HepG2 (cell line): ENCODE measurements at regions of chrX and their contacts with region 1.

Region 1: DNA sequence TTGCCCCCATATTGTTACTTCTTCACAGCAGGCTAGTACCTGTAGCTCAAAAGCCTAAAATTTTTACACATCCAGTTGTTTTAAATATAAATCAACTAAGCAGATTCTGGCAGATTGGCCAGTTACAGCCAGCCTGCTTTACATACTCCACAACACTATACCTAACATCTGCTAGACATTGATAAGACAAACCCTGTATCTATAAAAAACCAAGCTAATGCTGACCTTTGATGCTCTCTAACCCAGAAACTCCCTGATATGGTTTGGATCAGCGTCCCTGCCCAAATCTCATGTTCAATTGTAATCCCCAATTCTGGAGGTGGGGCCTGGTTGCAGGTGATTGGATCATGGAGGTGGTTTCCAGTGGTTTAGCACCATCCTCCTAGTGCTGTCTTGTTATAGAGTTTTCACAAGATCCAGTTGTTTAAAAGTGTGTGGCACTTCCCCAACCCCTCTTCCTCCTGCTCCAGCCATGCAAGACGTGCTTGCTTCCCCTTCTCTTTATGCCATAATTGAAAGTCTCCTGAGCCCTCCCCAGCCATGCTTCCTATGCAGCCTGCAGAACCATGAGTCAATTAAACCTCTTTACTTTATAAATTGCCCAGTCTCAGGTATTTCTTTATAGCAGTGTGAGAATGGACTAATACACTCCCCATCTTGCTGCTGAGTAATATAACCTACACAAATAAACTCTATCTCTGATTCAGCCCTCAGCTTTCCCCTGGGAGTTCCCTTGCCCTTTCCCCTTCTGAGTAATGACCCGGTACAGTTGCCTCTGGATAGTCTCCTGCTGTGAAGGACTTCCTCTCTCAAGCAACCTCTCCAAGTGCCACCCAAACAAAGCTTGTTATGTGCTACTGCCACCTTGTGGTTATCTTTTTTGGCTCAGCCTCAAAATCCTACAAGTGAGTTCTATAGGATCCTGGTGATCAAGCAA is 39.6 kb downstream of the ZCCHC13 start:
- DNase-seq: peak; percentile 60
- ATAC-seq: peak; percentile 82
- H3K4me3 ChIP-seq: no peak overlapping the region
- H3K27ac ChIP-seq: no peak overlapping the region
- H3K4me1 ChIP-seq: no peaks in the 10 kb centered on the region
- H3K27me3 ChIP-seq: no peaks in the 10 kb centered on the region
- CTCF ChIP-seq: peak; percentile 75
- EP300 ChIP-seq: no peak
- POLR2A ChIP-seq: no peak
- RAD21 ChIP-seq: 0 out of 2 replicates have a peak, but pooled peaks have one; percentile 20

Region 2: DNA sequence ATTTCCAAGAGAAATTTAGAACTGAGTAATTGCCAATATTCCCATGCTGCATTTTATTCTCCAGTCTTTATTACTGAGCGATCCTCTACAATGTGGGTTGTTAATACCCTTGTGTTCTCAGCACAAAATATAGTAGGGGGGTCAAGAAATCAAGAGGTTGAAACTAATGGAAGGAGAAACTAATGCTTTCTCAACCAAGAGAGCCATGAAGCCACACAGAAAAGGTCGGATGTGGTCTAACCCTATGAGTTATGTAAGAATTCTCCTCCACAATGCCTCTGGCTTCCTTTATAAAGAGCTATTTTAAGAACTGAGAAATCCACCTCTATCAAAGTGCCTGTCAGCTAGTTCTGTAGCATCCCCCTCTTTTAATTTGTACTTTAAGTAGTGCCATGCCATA is 512.1 kb before region 1 on chrX:
- CTCF ChIA-PET with region 1: no interaction called
- POLR2A ChIA-PET with region 1: no interaction called
- in situ Hi-C with region 1: no loop called
- intact Hi-C with region 1: no loop called
- DNase-seq: no peak
- ATAC-seq: no peak
- H3K4me3 ChIP-seq: no peak overlapping the region
- H3K27ac ChIP-seq: no peak overlapping the region
- H3K4me1 ChIP-seq: no peaks in the 10 kb centered on the region
- H3K27me3 ChIP-seq: no peaks in the 10 kb centered on the region
- CTCF ChIP-seq: no peak
- EP300 ChIP-seq: no peak
- POLR2A ChIP-seq: no peak
- RAD21 ChIP-seq: no peak

Region 3: GRCh38 chrX:73855546-73855945 is 488.1 kb before region 1 on chrX:
- CTCF ChIA-PET with region 1: interaction called, 5 read pairs
- POLR2A ChIA-PET with region 1: no interaction called
- in situ Hi-C with region 1: loop called (anchors 10 kb)
- intact Hi-C with region 1: loop called (anchors 1 kb)
- DNase-seq: peak; percentile 22
- ATAC-seq: peak; percentile 79
- H3K4me3 ChIP-seq: no peak overlapping the region
- H3K27ac ChIP-seq: no peak overlapping the region
- H3K4me1 ChIP-seq: no peaks in the 10 kb centered on the region
- H3K27me3 ChIP-seq: no peaks in the 10 kb centered on the region
- CTCF ChIP-seq: peak; percentile 78
- EP300 ChIP-seq: no peak
- POLR2A ChIP-seq: no peak
- RAD21 ChIP-seq: peak; percentile 57

Region 4: DNA sequence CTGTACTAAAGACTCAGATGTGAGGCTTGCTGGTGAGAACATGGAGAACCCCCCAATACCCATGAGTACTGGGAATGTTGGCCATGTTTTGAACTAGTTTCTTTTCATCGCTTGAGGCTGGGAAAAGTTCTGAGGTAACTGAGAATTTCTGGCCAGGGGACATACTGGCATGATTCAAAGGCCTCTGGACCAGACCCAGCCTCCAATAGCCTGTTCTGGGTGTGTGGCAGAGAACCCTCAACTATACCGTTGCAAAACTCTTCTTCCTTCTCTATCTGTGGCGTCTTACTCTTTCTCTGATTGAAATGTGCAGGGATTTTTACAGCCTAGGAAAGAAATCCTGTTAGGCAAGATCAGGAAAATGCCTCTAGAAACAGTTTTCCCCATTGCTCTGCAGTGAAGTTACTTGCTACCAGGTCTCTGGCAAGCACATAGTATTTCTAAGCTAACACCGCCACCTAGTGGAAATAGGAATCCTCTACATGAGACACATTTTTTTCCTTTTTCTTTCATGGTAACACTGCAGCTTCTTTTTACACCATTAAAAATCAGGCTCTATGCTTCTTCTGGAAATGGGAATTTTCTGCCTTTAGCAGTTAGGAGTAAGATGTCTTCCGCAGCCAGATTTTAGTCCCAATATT is 210.3 kb before region 1 on chrX:
- CTCF ChIA-PET with region 1: no interaction called
- POLR2A ChIA-PET with region 1: no interaction called
- in situ Hi-C with region 1: no loop called
- intact Hi-C with region 1: loop called (anchors 5 kb)
- DNase-seq: peak; percentile 46
- ATAC-seq: peak; percentile 74
- H3K4me3 ChIP-seq: no peak overlapping the region
- H3K27ac ChIP-seq: no peak overlapping the region
- H3K4me1 ChIP-seq: no peaks in the 10 kb centered on the region
- H3K27me3 ChIP-seq: no peaks in the 10 kb centered on the region
- CTCF ChIP-seq: peak; percentile 71
- EP300 ChIP-seq: no peak
- POLR2A ChIP-seq: no peak
- RAD21 ChIP-seq: no peak

Region 5: DNA sequence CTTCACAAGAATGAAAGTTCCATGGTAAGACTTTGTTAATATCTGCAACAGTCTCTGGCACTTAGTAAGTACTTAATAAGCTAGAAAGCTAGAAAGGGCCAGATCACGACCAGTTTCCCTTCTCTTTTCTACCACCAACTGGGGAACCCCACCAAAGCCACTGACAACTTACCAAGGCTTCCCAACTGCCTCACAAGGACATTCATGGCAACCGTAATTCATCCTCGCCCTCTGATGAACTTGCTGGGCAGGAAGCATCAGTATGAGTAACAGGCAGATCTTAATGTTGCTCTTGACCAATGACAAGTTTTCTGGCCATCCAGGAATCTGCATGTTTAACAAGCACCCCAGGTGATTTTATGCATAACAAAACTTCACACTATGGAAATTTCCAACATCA is 62.9 kb before region 1 on chrX:
- CTCF ChIA-PET with region 1: no interaction called
- POLR2A ChIA-PET with region 1: no interaction called
- in situ Hi-C with region 1: no loop called
- intact Hi-C with region 1: no loop called
- DNase-seq: no peak
- ATAC-seq: no peak
- H3K4me3 ChIP-seq: no peak overlapping the region
- H3K27ac ChIP-seq: no peak overlapping the region
- H3K4me1 ChIP-seq: no peaks in the 10 kb centered on the region
- H3K27me3 ChIP-seq: no peaks in the 10 kb centered on the region
- CTCF ChIP-seq: no peak
- EP300 ChIP-seq: no peak
- POLR2A ChIP-seq: no peak
- RAD21 ChIP-seq: no peak

Region 6: GRCh38 chrX:74291964-74292807 is 51.4 kb before region 1 on chrX:
- CTCF ChIA-PET with region 1: no interaction called
- POLR2A ChIA-PET with region 1: no interaction called
- in situ Hi-C with region 1: no loop called
- intact Hi-C with region 1: loop called (anchors 10 kb)
- DNase-seq: peak; percentile 76
- ATAC-seq: peak; percentile 96
- H3K4me3 ChIP-seq: peak overlapping the region; percentile 71 to 81 (median 80)
- H3K27ac ChIP-seq: peak overlapping the region; percentile 97
- H3K4me1 ChIP-seq: peaks cover 19% of the 10 kb centered on the region
- H3K27me3 ChIP-seq: no peaks in the 10 kb centered on the region; a peak in 1 of 5 replicates
- CTCF ChIP-seq: peak; percentile 63
- EP300 ChIP-seq: no peak
- POLR2A ChIP-seq: peak; percentile 51 to 63
- RAD21 ChIP-seq: no peak

Region 7: DNA sequence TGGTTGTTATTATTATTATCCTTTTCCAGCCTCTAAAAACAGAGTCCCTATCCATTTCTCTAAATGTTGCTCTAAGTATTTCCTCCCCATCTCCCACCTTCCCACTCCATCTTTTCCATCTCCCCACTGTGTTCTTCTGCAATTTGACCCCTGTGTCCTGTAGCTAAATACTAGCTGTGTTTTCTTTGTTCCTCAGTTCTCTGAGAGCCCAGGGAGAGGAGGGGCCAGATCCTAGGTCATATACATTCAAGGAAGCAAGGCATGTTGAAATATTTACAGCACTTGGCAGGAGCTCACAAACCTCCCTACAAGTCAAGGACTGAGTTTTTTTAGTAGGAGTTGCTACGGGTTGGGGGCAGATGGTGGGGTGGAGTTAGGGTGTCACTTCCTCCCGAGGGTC is 88.2 kb after region 1 on chrX:
- CTCF ChIA-PET with region 1: no interaction called
- POLR2A ChIA-PET with region 1: no interaction called
- in situ Hi-C with region 1: no loop called
- intact Hi-C with region 1: no loop called
- DNase-seq: no peak
- ATAC-seq: no peak
- H3K4me3 ChIP-seq: no peak overlapping the region
- H3K27ac ChIP-seq: no peak overlapping the region
- H3K4me1 ChIP-seq: no peaks in the 10 kb centered on the region
- H3K27me3 ChIP-seq: no peaks in the 10 kb centered on the region
- CTCF ChIP-seq: no peak
- EP300 ChIP-seq: no peak
- POLR2A ChIP-seq: no peak
- RAD21 ChIP-seq: no peak

Region 8: DNA sequence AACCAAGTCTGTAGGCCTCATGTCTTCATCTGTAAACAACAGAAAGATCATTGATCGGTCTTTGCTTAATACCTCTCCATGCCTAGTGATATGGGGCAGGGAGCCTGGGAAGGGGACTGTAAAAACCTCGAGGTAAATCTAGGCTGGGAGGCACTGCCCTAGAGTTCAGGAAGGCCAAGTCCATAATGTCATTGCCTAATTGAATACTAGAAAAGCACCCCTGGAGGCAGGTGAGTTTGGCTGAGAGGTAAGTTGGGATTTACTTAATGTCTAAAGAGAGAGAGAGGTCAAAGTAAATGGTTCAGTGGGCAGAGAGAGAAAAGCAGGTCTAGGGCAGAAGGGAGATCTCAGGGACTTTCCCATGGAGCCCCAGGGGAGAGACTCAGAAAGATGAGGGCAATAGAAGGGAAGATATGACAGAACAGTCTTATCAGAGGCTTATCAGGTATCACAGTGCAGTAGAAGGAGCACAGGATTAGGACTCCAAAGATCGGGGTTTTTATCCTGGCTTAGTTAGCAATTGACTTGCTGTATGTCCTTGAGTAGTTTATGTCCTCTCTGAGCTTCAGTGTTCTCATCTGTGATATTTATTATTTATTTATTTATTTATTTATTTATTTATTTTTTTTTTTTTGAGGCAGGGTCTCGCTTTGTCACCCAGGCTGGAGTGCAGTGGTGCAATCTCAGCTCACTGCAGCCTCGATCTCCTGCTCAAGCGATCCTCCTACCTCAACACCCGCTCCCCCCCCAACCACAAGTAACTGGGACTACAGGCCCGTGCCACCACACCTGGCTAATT is 162.9 kb after region 1 on chrX:
- CTCF ChIA-PET with region 1: no interaction called
- POLR2A ChIA-PET with region 1: no interaction called
- in situ Hi-C with region 1: no loop called
- intact Hi-C with region 1: no loop called
- DNase-seq: no peak
- ATAC-seq: no peak
- H3K4me3 ChIP-seq: no peak overlapping the region
- H3K27ac ChIP-seq: no peak overlapping the region
- H3K4me1 ChIP-seq: no peaks in the 10 kb centered on the region
- H3K27me3 ChIP-seq: no peaks in the 10 kb centered on the region
- CTCF ChIP-seq: no peak
- EP300 ChIP-seq: no peak
- POLR2A ChIP-seq: no peak
- RAD21 ChIP-seq: no peak